Right ventricle myocardium inferior (tissue), 1 donor: ENCODE measurements at regions of chr5 and their contacts with region 1.

Region 1: GRCh38 chr5:143341807-143342570 is 61.5 kb downstream of the NR3C1 start:
- DNase-seq: no peak
- ATAC-seq: peak; percentile 29

Region 2: GRCh38 chr5:143395638-143396352 is 53.8 kb after region 1 on chr5:
- intact Hi-C with region 1: loop called (anchors 10 kb)
- DNase-seq: no peak
- ATAC-seq: no peak